Activated T-helper 2 cell treated with anti-CD3 and anti-CD28 coated beads, Interferon-gamma antibody, Interleukin-2, Interleukin-4, amounts not matched to agents 10 μg/mL and 5 μg/mL and 100 μg/mL, durations not matched to agents 14 hours and 24 hours and 36 hours (primary cell): ENCODE measurements at regions of chr2 and their contacts with region 1.

Region 1: DNA sequence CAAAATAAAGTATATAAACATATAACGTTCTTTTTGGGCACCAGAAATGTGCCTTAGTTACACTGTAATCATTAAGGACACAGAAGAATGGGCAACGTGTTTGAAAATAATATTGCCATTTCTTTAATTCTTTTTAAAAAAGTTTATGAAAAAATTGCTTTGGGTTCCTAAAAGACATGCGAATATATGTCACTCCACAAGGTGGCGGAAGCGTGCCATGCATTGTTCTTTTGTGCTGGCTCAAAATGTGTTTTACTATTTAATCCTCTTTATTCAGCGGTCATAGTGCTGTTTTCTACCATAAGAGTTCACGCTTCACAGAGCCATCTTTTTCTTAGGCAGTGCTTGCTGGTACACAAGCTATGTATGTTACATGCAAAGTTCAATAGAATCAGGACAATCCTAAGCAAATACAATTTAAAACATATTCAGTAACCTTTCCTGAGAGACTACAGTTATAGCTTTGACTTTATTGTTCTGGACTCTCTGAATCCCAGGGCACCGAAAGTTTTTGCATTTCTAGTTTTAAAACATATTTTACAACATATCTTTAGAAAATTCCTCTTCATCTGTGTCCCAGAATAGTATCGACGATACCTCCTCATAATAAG is 147.8 kb upstream of the ERBB4 start:
- DNase-seq: peak; percentile 17
- H3K4me3 Mint-ChIP-seq: no peak overlapping the region
- H3K27ac Mint-ChIP-seq: no peak overlapping the region
- H3K4me1 Mint-ChIP-seq: no peaks in the 10 kb centered on the region
- H3K27me3 Mint-ChIP-seq: peaks cover 4% of the 10 kb centered on the region

Region 2: GRCh38 chr2:212665948-212666347 is 20.4 kb before region 1 on chr2:
- intact Hi-C with region 1: no loop called
- DNase-seq: no peak
- H3K4me3 Mint-ChIP-seq: no peak overlapping the region
- H3K27ac Mint-ChIP-seq: no peak overlapping the region
- H3K4me1 Mint-ChIP-seq: no peaks in the 10 kb centered on the region
- H3K27me3 Mint-ChIP-seq: no peaks in the 10 kb centered on the region

Region 3: GRCh38 chr2:212711856-212712255 is 25.5 kb after region 1 on chr2:
- intact Hi-C with region 1: no loop called
- DNase-seq: no peak
- H3K4me3 Mint-ChIP-seq: no peak overlapping the region
- H3K27ac Mint-ChIP-seq: no peak overlapping the region
- H3K4me1 Mint-ChIP-seq: no peaks in the 10 kb centered on the region
- H3K27me3 Mint-ChIP-seq: peaks cover 2% of the 10 kb centered on the region

Region 4: GRCh38 chr2:212777020-212777491 is 90.7 kb after region 1 on chr2:
- intact Hi-C with region 1: loop called (anchors 1 kb)
- DNase-seq: no peak
- H3K4me3 Mint-ChIP-seq: no peak overlapping the region
- H3K27ac Mint-ChIP-seq: no peak overlapping the region
- H3K4me1 Mint-ChIP-seq: peaks cover 6% of the 10 kb centered on the region
- H3K27me3 Mint-ChIP-seq: no peaks in the 10 kb centered on the region